ENCODE measurements at regions of chr1 and their contacts with region 1.

Region 1: DNA sequence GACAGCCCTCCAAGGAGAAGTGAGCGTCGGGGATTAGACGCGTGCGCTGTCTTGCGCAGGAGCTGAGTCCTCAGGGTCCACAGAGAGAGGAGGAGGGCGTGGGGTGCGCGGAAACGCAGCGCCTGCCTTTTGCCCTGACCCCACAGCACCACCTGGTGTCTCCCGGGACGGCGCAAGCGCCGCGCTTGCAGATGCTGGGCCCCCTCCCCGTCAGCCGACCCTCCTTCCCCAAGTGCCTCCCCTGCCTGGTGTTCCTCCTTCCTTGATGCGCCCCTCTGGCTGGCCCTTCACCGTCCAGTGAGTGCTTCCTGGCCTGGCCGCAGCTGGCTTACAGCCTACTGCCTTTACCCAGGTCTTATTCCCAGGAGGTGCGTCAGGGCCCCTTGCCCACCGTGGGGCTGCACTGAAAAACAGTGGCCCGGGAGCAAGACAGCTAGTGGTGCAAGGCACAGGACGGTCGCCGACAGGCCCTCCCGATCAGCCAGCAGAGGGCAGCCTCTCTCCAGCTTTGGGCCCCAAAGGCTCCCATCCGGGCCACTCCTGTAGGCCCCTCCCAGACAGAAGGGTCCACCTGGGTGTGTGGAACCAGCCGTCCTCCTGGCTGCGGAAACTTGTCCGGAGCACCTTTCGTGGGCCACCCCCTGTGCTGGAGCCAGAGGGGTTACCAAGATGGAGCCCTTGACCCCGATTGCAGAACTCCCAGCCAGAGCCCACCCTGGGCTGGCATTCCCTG is 12.9 kb upstream of the PHLDA3 start:
- DNase-seq: peak; percentile 85
- H3K4me3 Mint-ChIP-seq: peak overlapping the region; percentile 53
- H3K27ac Mint-ChIP-seq: no peak overlapping the region
- H3K4me1 Mint-ChIP-seq: peaks cover 17% of the 10 kb centered on the region
- H3K27me3 Mint-ChIP-seq: peaks cover 16% of the 10 kb centered on the region

Region 2: DNA sequence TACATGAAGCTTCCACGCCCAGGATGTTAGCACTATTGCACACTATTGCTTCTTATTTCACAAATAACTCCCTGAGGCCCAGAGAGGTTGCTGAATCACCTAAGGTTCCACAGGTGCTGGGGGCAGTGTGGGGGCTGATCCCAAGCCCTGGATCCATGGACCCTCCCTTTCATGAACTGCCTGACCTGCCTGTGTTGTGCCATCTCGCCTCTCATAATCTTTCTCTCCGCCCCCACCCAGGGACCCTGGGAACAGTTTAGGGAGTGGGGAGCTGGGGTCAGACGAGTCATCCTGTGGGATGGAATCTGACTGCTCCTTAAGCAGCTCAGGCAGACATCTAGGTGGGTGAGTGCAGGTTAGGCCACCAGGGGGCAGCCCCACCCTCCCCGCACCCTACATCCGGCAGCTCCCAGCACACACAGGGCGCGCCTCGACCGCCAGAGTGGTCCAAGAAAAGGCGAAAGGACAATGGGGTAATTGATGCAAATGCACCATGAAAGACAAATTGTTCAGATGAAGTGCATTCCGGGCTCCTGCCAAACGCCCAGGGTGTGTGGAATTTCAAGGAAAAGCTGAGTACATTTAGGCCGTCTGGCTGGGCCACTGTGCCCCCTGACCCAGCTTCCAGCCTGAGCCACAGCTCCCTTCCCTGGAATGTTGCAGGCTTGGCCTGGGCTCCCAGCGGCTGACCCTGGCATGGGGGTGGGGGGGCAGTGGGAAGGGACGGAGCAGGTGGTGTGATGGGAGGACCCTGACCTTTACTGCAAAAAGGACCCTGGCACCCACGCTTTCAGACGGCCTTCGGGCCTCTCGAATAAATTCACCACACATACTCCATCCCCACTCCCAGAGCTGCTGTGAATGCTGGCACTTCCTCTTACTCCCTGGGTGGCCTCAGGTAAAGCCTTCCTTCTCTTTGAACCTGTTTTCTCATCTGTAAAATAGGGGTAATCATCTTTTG is 33.7 kb before region 1 on chr1:
- CTCF ChIA-PET with region 1: interaction called, 87 read pairs
- intact Hi-C with region 1: loop called (anchors 1 kb)
- DNase-seq: peak; percentile 81
- H3K4me3 Mint-ChIP-seq: no peak overlapping the region
- H3K27ac Mint-ChIP-seq: no peak overlapping the region
- H3K4me1 Mint-ChIP-seq: peaks cover 6% of the 10 kb centered on the region
- H3K27me3 Mint-ChIP-seq: peaks cover 24% of the 10 kb centered on the region

Region 3: GRCh38 chr1:201495471-201496295 is 13.8 kb after region 1 on chr1:
- CTCF ChIA-PET with region 1: interaction called, 19 read pairs
- intact Hi-C with region 1: no loop called
- DNase-seq: no peak
- H3K4me3 Mint-ChIP-seq: no peak overlapping the region
- H3K27ac Mint-ChIP-seq: no peak overlapping the region
- H3K4me1 Mint-ChIP-seq: no peaks in the 10 kb centered on the region
- H3K27me3 Mint-ChIP-seq: no peaks in the 10 kb centered on the region

Region 4: DNA sequence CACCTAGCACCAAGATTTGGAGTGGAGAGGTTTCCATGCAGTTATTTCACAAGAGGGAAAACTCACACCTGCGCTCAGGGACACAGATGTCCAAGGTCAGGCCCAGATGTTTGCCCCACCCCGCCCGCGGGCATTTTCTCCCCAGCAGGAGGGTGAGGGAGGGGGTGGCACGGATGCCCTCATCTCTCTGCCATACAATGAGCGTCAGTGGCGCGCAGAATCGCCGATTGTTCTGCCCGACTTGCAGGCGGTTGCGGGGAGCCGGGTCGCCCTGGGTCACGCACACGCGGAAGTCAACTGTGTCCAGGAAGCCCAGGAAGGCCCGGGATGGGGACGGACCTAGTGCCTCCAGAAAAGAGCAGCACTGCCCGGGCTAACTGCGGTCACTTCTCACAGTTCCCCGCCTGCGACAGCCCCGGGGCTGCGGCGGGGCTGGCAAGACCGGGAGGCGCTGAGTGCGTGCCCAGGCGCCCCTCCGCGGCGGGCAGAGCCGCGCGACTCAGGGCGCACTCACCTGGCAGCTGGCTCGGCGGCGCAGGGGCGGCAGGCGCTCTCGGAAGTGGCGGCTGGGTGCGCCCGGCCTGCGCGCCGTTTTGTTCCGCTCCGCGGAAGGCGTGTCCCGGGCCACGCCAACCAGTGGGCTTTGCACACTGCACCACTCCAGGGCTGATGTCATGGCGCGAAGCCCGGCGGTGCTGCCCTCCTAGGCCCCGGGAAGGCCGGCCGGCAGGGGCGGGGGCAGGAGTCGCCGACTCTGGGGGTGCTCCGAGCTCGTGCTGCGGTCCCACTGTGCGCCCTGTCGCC is 24.8 kb after region 1 on chr1 and contains the start of gene CSRP1:
- CTCF ChIA-PET with region 1: interaction called, 287 read pairs
- intact Hi-C with region 1: loop called (anchors 1 kb)
- DNase-seq: peak; percentile 89
- H3K4me3 Mint-ChIP-seq: peak within 1 kb of the TSS; percentile 83
- H3K27ac Mint-ChIP-seq: peak within 1 kb of the TSS; percentile 82
- H3K4me1 Mint-ChIP-seq: peaks cover 42% of the 10 kb centered on the region
- H3K27me3 Mint-ChIP-seq: no peaks in the 10 kb centered on the region
- total RNA-seq, gene CSRP1: 35.7 to 36.6 TPM

Region 5: DNA sequence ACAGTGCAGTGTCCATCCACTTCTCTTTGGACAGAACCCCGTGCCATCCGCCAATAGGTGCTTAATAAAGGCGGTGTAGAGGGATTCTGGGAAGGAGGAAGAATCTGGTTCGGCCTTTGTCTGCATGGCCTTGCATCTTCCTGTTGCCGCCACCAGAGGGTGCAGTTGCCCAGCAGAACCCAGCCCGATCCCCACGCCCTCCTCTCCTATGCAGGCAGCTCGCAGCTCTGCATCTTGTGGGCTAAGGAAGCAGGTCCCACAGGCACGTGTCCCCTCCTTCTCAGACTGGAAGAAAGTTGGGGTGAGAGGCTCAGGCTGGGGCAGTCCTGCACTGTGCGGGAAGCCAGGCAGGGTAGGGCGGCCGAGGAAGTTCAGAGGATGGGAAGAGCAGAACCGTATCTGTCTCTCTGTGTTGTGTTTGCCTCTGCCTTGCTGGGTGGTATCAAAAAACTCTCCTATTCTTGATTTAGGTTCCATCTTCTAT is 77.8 kb after region 1 on chr1:
- CTCF ChIA-PET with region 1: interaction called, 4 read pairs
- intact Hi-C with region 1: loop called (anchors 1 kb)
- DNase-seq: peak; percentile 80
- H3K4me3 Mint-ChIP-seq: no peak overlapping the region
- H3K27ac Mint-ChIP-seq: no peak overlapping the region
- H3K4me1 Mint-ChIP-seq: peaks cover 3% of the 10 kb centered on the region
- H3K27me3 Mint-ChIP-seq: no peaks in the 10 kb centered on the region

Region 6: GRCh38 chr1:201649761-201650622 is 168.1 kb after region 1 on chr1:
- CTCF ChIA-PET with region 1: no interaction called
- intact Hi-C with region 1: no loop called
- DNase-seq: no peak
- H3K4me3 Mint-ChIP-seq: peak overlapping the region; percentile 29
- H3K27ac Mint-ChIP-seq: no peak overlapping the region
- H3K4me1 Mint-ChIP-seq: peaks cover 4% of the 10 kb centered on the region
- H3K27me3 Mint-ChIP-seq: peaks cover 29% of the 10 kb centered on the region

Region 7: GRCh38 chr1:201676197-201676596 is 194.3 kb after region 1 on chr1:
- CTCF ChIA-PET with region 1: no interaction called
- intact Hi-C with region 1: no loop called
- DNase-seq: no peak
- H3K4me3 Mint-ChIP-seq: no peak overlapping the region
- H3K27ac Mint-ChIP-seq: no peak overlapping the region
- H3K4me1 Mint-ChIP-seq: peaks cover 2% of the 10 kb centered on the region
- H3K27me3 Mint-ChIP-seq: peaks cover 6% of the 10 kb centered on the region

Region 8: GRCh38 chr1:202076050-202076511 is 594.2 kb after region 1 on chr1:
- CTCF ChIA-PET with region 1: no interaction called
- intact Hi-C with region 1: no loop called
- DNase-seq: no peak
- H3K4me3 Mint-ChIP-seq: no peak overlapping the region
- H3K27ac Mint-ChIP-seq: no peak overlapping the region
- H3K4me1 Mint-ChIP-seq: no peaks in the 10 kb centered on the region
- H3K27me3 Mint-ChIP-seq: no peaks in the 10 kb centered on the region

Measured in activated naive CD4-positive, alpha-beta T cell treated with anti-CD3 and anti-CD28 coated beads for 36 hours (primary cell).